ENCODE measurements at regions of chr7 and their contacts with region 1.

Region 1: DNA sequence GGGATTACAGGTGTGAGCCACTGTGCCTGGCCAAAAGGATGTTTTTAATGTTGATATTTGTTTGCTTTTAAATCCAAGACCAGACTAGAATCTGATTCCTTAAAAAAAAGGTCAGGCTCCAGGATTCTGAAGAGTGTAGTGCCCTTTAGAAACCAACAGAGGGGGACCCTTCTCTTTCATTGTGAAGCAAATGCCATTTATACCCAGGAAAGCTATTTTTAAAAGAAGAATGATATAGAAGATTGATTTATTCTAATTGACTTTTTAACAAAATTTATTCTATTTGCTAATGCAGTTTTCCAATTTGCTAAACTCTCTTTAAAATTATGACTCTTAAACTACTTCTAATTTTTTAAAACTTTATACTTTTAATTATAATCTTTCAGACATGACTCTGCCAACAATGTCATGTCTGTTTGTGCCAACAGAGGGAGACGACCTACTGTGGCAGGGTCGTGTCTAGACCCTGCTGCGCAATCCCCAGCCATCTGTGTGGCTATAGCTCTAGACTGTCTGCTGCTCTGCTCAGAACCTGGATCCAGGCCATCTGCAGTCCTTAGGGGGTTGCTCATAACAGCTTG is 201.0 kb upstream of the IMMP2L start:
- DNase-seq: peak in 2 of 4 experiments; percentile 43 to 61
- ATAC-seq: peak; percentile 83
- H3K4me3 ChIP-seq: no peak overlapping the region
- H3K27ac ChIP-seq: no peak overlapping the region
- H3K4me1 ChIP-seq: no peaks in the 10 kb centered on the region
- H3K27me3 ChIP-seq: peaks cover 0 to 3% of the 10 kb centered on the region in 2 experiments; a peak in 1 of 5 replicates
- CTCF ChIP-seq: peak; percentile 51 to 81 (median 55); a peak in 5 of 6 replicates
- EP300 ChIP-seq: no peak
- POLR2A ChIP-seq: no peak
- RAD21 ChIP-seq: peak; percentile 82 to 88

Region 2: DNA sequence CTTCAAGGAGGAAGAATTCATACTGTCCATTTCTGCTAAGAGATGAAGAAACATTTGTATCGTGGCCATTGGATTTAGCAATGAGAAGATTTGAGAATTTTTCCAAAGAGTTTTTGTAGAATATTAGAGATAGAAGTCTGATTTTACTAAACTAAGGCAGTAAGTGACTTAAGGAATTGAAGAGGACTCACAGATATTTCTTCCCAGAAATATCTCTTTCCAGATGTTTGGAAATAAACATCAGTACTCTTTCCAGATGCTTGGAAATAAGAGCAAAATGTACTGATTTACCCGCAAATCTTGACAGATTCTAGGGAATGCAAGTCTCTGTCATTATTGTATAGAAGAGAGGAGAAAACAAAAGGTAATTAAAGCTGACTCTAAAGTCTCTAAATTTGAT is 292.3 kb before region 1 on chr7:
- CTCF ChIA-PET with region 1: no interaction called
- POLR2A ChIA-PET with region 1: no interaction called
- in situ Hi-C with region 1: no loop called
- intact Hi-C with region 1: no loop called
- DNase-seq: no peak
- ATAC-seq: no peak
- H3K4me3 ChIP-seq: no peak overlapping the region
- H3K27ac ChIP-seq: no peak overlapping the region
- H3K4me1 ChIP-seq: peaks cover 0 to 22% of the 10 kb centered on the region in 2 experiments; a peak in 2 of 5 replicates
- H3K27me3 ChIP-seq: no peaks in the 10 kb centered on the region
- CTCF ChIP-seq: no peak
- EP300 ChIP-seq: no peak
- POLR2A ChIP-seq: no peak
- RAD21 ChIP-seq: no peak

Region 3: GRCh38 chr7:111855161-111855856 is 92.0 kb after region 1 on chr7:
- CTCF ChIA-PET with region 1: interaction called, 10 read pairs
- POLR2A ChIA-PET with region 1: no interaction called
- in situ Hi-C with region 1: no loop called
- intact Hi-C with region 1: loop called (anchors 2 kb)
- DNase-seq: peak in 2 of 4 experiments; percentile 19 to 40
- ATAC-seq: peak; percentile 86
- H3K4me3 ChIP-seq: no peak overlapping the region
- H3K27ac ChIP-seq: no peak overlapping the region
- H3K4me1 ChIP-seq: no peaks in the 10 kb centered on the region
- H3K27me3 ChIP-seq: peaks cover 4 to 10% of the 10 kb centered on the region in 2 experiments; a peak in 2 of 5 replicates
- CTCF ChIP-seq: peak; percentile 59 to 62 (median 60)
- EP300 ChIP-seq: no peak
- POLR2A ChIP-seq: no peak
- RAD21 ChIP-seq: peak in 1 of 2 experiments; percentile 43; a peak in 2 of 4 replicates

Region 4: DNA sequence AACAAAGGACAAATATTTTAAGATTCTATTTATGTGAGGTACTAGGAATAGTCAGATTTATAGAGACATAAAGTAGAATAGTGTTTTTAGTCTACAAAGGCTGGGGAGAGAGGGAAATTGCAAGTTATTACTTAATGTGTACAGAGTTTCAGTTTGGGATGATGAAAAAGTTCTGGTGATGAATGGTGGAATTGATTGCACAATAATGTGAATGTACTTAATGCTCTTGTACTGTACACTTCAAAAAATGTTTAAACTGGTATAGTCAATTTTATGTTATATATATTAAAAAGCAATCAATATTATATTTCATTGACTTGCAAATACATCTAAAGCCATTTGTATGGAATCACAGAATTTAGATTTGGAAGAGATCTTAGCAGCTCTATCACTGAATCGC is 1942.1 kb after region 1 on chr7:
- CTCF ChIA-PET with region 1: no interaction called
- POLR2A ChIA-PET with region 1: no interaction called
- in situ Hi-C with region 1: no loop called
- intact Hi-C with region 1: loop called (anchors 10 kb)
- DNase-seq: no peak
- ATAC-seq: no peak
- H3K4me3 ChIP-seq: no peak overlapping the region
- H3K27ac ChIP-seq: no peak overlapping the region
- H3K4me1 ChIP-seq: no peaks in the 10 kb centered on the region
- H3K27me3 ChIP-seq: no peaks in the 10 kb centered on the region
- CTCF ChIP-seq: no peak
- EP300 ChIP-seq: no peak
- POLR2A ChIP-seq: no peak
- RAD21 ChIP-seq: no peak